ENCODE measurements at regions of chr12 and their contacts with region 1.

Region 1: GRCh38 chr12:92145731-92146496 is at the start of gene BTG1:
- DNase-seq: peak; percentile 99
- ATAC-seq: peak; percentile 83
- H3K4me3 Mint-ChIP-seq: peak within 1 kb of the TSS; percentile 97
- H3K27ac Mint-ChIP-seq: peak within 1 kb of the TSS; percentile 95
- H3K4me1 Mint-ChIP-seq: peaks cover 21% of the 10 kb centered on the region
- H3K27me3 Mint-ChIP-seq: no peaks in the 10 kb centered on the region
- CTCF ChIP-seq: no peak
- total RNA-seq, gene BTG1: 197 to 200 TPM

Region 2: GRCh38 chr12:91811481-91812287 is 334.2 kb before region 1 on chr12:
- CTCF ChIA-PET with region 1: interaction called, 17 read pairs
- POLR2A ChIA-PET with region 1: interaction called, 3 read pairs
- intact Hi-C with region 1: loop called (anchors 5 kb)
- DNase-seq: peak; percentile 87
- ATAC-seq: peak; percentile 78
- H3K4me3 Mint-ChIP-seq: no peak overlapping the region
- H3K27ac Mint-ChIP-seq: peak overlapping the region; percentile 79
- H3K4me1 Mint-ChIP-seq: peaks cover 26% of the 10 kb centered on the region
- H3K27me3 Mint-ChIP-seq: no peaks in the 10 kb centered on the region
- CTCF ChIP-seq: peak; percentile 92

Region 3: GRCh38 chr12:92158796-92159439 is 13.0 kb after region 1 on chr12:
- CTCF ChIA-PET with region 1: interaction called, 4 read pairs
- POLR2A ChIA-PET with region 1: interaction called, 12 read pairs
- intact Hi-C with region 1: no loop called
- DNase-seq: no peak
- ATAC-seq: peak; percentile 58
- H3K4me3 Mint-ChIP-seq: peak overlapping the region; percentile 47
- H3K27ac Mint-ChIP-seq: peak overlapping the region; percentile 90
- H3K4me1 Mint-ChIP-seq: peaks cover 64% of the 10 kb centered on the region
- H3K27me3 Mint-ChIP-seq: no peaks in the 10 kb centered on the region
- CTCF ChIP-seq: no peak

Region 4: GRCh38 chr12:92199819-92200576 is 54.1 kb after region 1 on chr12:
- CTCF ChIA-PET with region 1: no interaction called
- POLR2A ChIA-PET with region 1: interaction called, 10 read pairs
- intact Hi-C with region 1: no loop called
- DNase-seq: no peak
- ATAC-seq: no peak
- H3K4me3 Mint-ChIP-seq: no peak overlapping the region
- H3K27ac Mint-ChIP-seq: no peak overlapping the region
- H3K4me1 Mint-ChIP-seq: peaks cover 3% of the 10 kb centered on the region
- H3K27me3 Mint-ChIP-seq: no peaks in the 10 kb centered on the region
- CTCF ChIP-seq: no peak

Region 5: GRCh38 chr12:92218394-92219077 is 72.6 kb after region 1 on chr12:
- CTCF ChIA-PET with region 1: no interaction called
- POLR2A ChIA-PET with region 1: interaction called, 10 read pairs
- intact Hi-C with region 1: no loop called
- DNase-seq: no peak
- ATAC-seq: peak; percentile 91
- H3K4me3 Mint-ChIP-seq: no peak overlapping the region
- H3K27ac Mint-ChIP-seq: peak overlapping the region; percentile 77
- H3K4me1 Mint-ChIP-seq: peaks cover 28% of the 10 kb centered on the region
- H3K27me3 Mint-ChIP-seq: no peaks in the 10 kb centered on the region
- CTCF ChIP-seq: no peak

Region 6: GRCh38 chr12:92408072-92408900 is 262.4 kb after region 1 on chr12:
- CTCF ChIA-PET with region 1: interaction called, 10 read pairs
- POLR2A ChIA-PET with region 1: interaction called, 88 read pairs
- intact Hi-C with region 1: loop called (anchors 2 kb)
- DNase-seq: peak; percentile 81
- ATAC-seq: peak; percentile 50
- H3K4me3 Mint-ChIP-seq: no peak overlapping the region
- H3K27ac Mint-ChIP-seq: peak overlapping the region; percentile 63
- H3K4me1 Mint-ChIP-seq: peaks cover 41% of the 10 kb centered on the region
- H3K27me3 Mint-ChIP-seq: no peaks in the 10 kb centered on the region
- CTCF ChIP-seq: peak; percentile 58

Region 7: DNA sequence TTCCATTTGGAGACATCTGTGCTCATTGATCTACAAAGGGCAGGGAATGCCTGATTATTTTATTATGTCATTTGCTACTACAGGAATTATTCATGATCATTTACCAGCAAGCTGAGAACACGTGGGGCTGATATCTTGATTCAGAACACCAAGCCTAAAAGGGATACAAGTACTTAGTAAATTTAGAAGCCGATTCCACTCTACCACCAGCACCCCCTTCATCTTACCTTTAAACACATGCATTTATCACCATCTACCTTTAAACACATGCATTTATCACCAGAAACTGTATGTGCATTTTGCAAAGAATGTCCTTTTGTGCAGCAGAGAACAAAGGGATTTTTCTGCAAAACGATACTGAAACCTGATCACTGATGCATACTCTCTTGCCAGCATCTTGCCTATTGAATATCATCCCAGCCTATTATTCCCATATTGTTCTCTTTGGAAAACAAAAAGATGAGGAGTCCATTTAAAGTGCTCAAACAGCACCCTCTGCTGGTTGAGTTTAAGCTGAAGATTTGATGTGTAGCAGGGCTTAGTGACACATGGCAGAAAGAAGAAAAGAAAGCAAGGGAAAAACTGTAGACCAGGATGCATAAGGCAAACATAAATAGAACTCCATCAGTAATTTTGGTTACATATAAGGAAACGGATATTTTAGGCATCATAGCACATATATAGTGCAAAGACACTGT is 424.3 kb after region 1 on chr12:
- CTCF ChIA-PET with region 1: interaction called, 6 read pairs
- POLR2A ChIA-PET with region 1: interaction called, 5 read pairs
- intact Hi-C with region 1: loop called (anchors 5 kb)
- DNase-seq: peak; percentile 66
- ATAC-seq: peak; percentile 89
- H3K4me3 Mint-ChIP-seq: no peak overlapping the region
- H3K27ac Mint-ChIP-seq: no peak overlapping the region
- H3K4me1 Mint-ChIP-seq: peaks cover 19% of the 10 kb centered on the region
- H3K27me3 Mint-ChIP-seq: no peaks in the 10 kb centered on the region
- CTCF ChIP-seq: peak; percentile 97

Measured in activated CD8-positive, alpha-beta T cell treated with anti-CD3 and anti-CD28 coated beads for 36 hours (primary cell).